Endothelial cell of umbilical vein (primary cell): ENCODE measurements at regions of chr13 and their contacts with region 1.

Region 1: DNA sequence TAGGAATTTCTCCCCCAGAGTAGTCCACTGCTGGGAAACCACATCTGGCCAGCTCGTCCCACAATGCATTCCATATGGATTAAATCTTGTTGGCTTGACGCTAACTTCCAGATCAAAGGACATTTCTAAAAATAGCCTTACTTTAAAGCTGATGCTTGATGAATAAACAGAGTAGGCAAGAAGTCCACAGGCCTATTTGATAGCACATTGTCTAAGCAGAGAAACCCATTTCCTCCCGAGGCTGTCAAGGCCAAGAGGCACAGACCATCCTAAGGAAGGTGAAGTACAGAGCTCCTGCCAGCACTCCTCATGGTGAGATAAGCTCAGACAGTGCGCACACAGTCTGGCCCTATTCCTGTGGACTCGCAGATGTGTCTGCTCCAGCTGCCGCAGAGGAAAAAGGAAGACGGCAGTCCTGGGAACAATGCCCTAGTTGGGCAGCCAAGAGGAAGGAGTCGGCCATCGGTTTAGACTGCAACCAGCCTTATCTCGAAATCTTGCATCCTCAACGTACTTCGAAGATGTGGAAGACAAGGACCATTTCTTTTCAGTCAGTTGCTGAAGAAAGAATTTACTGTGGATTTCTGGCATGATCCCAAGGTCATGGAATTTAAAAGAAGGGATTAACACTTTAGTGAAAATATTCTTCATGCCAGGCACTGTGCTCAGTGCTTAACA is 156.8 kb downstream of the RGCC start:
- DNase-seq: peak; percentile 98
- H3K4me3 ChIP-seq: no peak overlapping the region
- H3K27ac ChIP-seq: peak overlapping the region; percentile 93
- H3K4me1 ChIP-seq: peaks cover 39% of the 10 kb centered on the region
- H3K27me3 ChIP-seq: no peaks in the 10 kb centered on the region
- CTCF ChIP-seq: no peak
- POLR2A ChIP-seq: no peak

Region 2: GRCh38 chr13:41004875-41005693 is 609.0 kb before region 1 on chr13:
- CTCF ChIA-PET with region 1: no interaction called
- POLR2A ChIA-PET with region 1: no interaction called
- dilution Hi-C with region 1: no loop called
- intact Hi-C with region 1: no loop called
- DNase-seq: peak; percentile 34
- H3K4me3 ChIP-seq: peak overlapping the region in 1 of 3 experiments; percentile 2
- H3K27ac ChIP-seq: no peak overlapping the region
- H3K4me1 ChIP-seq: peaks cover 16% of the 10 kb centered on the region
- H3K27me3 ChIP-seq: no peaks in the 10 kb centered on the region
- CTCF ChIP-seq: no peak
- POLR2A ChIP-seq: no peak

Region 3: DNA sequence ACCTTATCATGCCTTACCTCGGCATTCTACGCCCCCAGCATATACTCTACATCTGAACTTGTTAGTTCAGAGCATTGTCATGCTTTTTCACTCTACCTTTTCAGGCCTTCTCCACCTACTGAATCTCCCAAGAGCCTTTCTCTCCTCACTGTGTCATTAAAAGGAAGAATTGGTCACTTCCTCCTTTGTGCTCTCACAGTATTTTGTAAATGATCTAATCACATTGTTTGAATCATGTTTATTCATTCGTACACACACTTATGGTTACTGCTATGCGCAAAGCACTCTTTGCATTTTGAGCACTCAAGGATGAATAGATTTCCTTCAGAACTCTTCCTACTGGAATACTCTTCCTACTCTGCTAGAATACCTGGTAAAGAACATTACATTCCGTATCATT is 579.2 kb before region 1 on chr13:
- CTCF ChIA-PET with region 1: no interaction called
- POLR2A ChIA-PET with region 1: no interaction called
- dilution Hi-C with region 1: no loop called
- intact Hi-C with region 1: no loop called
- DNase-seq: peak; percentile 70
- H3K4me3 ChIP-seq: no peak overlapping the region
- H3K27ac ChIP-seq: peak overlapping the region; percentile 65
- H3K4me1 ChIP-seq: peaks cover 22% of the 10 kb centered on the region
- H3K27me3 ChIP-seq: no peaks in the 10 kb centered on the region
- CTCF ChIP-seq: no peak
- POLR2A ChIP-seq: no peak

Region 4: GRCh38 chr13:41352935-41353840 is 260.9 kb before region 1 on chr13:
- CTCF ChIA-PET with region 1: no interaction called
- POLR2A ChIA-PET with region 1: no interaction called
- dilution Hi-C with region 1: no loop called
- intact Hi-C with region 1: loop called (anchors 2 kb)
- DNase-seq: peak; percentile 87
- H3K4me3 ChIP-seq: no peak overlapping the region
- H3K27ac ChIP-seq: peak overlapping the region; percentile 72
- H3K4me1 ChIP-seq: peaks cover 12% of the 10 kb centered on the region
- H3K27me3 ChIP-seq: no peaks in the 10 kb centered on the region
- CTCF ChIP-seq: peak; percentile 59 to 69
- POLR2A ChIP-seq: no peak

Region 5: GRCh38 chr13:41377446-41377845 is 236.7 kb before region 1 on chr13:
- CTCF ChIA-PET with region 1: no interaction called
- POLR2A ChIA-PET with region 1: no interaction called
- dilution Hi-C with region 1: no loop called
- intact Hi-C with region 1: no loop called
- DNase-seq: no peak
- H3K4me3 ChIP-seq: no peak overlapping the region
- H3K27ac ChIP-seq: no peak overlapping the region
- H3K4me1 ChIP-seq: no peaks in the 10 kb centered on the region
- H3K27me3 ChIP-seq: no peaks in the 10 kb centered on the region
- CTCF ChIP-seq: no peak
- POLR2A ChIP-seq: no peak

Region 6: DNA sequence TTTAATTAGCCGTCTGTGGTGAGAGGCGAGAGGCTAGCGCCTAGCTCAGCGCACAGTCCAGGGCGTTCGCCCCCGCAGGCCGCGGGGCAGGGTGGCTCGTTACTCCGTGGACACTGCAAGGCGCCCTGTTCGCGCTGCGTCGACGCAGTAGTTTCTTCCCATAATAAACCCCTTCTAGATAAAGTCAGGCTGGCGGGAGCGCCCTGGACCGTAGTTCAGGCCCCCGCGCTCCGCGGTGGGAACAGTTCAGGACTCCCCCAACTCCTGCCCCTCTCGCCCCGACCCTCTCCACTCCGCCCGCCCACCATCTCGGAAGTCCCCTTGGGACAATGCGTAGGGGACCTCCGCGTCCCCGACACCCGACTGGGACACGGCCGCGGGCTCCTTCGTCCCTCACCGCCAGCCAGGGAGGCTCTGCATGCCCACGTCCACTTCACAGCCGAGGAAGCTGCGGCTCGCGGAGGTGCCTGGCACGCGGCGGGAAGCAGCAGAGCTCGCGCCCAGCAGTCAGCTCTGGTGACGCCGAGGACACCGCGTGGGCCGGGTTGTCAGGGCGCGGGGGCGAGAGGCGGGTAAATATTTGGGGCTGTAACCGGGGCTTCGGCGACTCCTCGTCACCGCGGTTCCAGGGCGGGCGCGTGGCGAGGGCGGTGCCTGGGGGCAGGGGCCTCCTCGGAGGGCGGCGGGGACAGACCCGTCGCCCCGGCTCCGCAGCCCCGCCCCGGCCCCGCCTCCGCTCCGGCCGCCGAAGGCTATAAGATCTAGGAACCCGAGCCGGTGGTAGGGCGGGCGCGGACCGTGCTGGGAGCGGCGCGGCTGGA is 157.1 kb before region 1 on chr13 and contains the start of gene RGCC:
- CTCF ChIA-PET with region 1: interaction called, 6 read pairs
- POLR2A ChIA-PET with region 1: interaction called, 3 read pairs
- dilution Hi-C with region 1: no loop called
- intact Hi-C with region 1: loop called (anchors 1 kb)
- DNase-seq: peak; percentile 74
- H3K4me3 ChIP-seq: peak within 1 kb of the TSS; percentile 56 to 90 (median 66)
- H3K27ac ChIP-seq: peak within 1 kb of the TSS; percentile 49
- H3K4me1 ChIP-seq: peaks cover 19% of the 10 kb centered on the region
- H3K27me3 ChIP-seq: peaks cover 11 to 12% of the 10 kb centered on the region in 2 experiments
- CTCF ChIP-seq: no peak
- POLR2A ChIP-seq: peak; percentile 87
- total RNA-seq, gene RGCC: 138 and 148 TPM in 2 replicates

Region 7: DNA sequence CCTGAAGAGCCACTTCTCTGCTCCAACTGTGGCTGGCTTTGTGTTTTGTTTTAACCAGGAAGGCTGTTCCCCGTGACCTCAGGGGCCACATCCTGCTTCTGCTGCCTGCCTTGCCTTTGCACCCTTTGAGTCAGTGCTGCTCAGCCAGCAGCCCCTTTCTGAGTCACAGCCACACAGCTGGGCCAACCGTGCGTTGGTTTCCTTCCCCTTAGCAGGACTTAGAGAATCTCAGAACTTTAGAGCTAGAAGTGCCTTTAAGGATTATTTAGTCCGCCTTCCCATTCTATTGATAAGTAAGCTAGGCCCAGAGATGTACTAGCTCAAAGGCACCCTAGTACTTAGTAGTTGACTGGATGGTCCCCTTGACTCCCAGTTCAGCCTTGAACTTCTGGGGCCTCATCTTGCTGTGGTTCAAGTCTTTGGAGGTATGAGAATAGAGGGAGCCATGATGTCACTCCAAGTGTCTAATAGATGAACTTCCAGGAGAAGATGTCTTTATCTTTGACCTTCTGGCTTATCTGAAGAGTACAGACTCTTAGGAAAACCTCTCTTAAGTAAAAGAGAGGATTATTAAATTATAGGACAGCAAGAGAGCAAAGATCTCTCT is 148.8 kb before region 1 on chr13:
- CTCF ChIA-PET with region 1: interaction called, 5 read pairs
- POLR2A ChIA-PET with region 1: interaction called, 5 read pairs
- dilution Hi-C with region 1: no loop called
- intact Hi-C with region 1: loop called (anchors 1 kb)
- DNase-seq: peak; percentile 96
- H3K4me3 ChIP-seq: no peak overlapping the region
- H3K27ac ChIP-seq: peak overlapping the region; percentile 86
- H3K4me1 ChIP-seq: peaks cover 37% of the 10 kb centered on the region
- H3K27me3 ChIP-seq: no peaks in the 10 kb centered on the region
- CTCF ChIP-seq: no peak
- POLR2A ChIP-seq: peak; percentile 36

Region 8: DNA sequence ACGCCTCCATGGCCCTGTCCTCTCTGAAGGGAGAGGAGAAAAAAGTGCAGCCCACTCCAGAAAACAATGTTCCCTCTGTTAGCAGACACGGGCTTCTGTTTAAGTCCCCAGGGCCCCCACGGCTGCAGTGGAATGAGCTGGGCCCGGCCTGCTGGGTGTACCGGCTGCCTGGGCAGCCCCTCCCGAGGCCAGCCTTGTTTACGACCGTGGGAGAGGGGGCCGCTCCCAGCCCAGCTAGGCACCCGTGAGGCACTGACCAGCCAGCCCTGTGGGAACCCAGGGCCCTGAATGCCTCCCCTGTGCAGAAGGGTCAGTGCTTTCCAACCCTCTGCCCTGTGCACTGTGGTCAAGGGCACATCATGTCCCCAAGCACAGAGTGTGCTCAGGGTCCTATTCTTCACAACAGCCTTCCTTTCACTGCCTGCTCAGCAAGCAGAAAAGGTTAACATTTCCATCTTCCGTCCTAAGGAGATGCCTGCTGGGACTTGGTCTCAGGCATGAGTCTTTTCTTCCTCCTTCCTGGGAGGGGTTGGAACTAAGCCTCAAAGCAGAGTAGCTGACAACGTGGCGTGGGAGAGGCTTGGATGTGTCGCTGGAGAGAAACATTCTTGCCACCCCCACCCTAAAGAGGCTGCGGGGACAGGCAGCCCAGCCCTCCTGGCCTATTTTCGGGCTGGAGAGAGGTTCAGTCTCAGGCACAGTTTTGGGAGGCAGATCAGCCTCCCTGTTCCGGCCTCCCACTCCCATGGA is 66.7 kb before region 1 on chr13:
- CTCF ChIA-PET with region 1: no interaction called
- POLR2A ChIA-PET with region 1: no interaction called
- dilution Hi-C with region 1: no loop called
- intact Hi-C with region 1: no loop called
- DNase-seq: no peak
- H3K4me3 ChIP-seq: no peak overlapping the region
- H3K27ac ChIP-seq: no peak overlapping the region
- H3K4me1 ChIP-seq: no peaks in the 10 kb centered on the region
- H3K27me3 ChIP-seq: no peaks in the 10 kb centered on the region
- CTCF ChIP-seq: no peak
- POLR2A ChIP-seq: no peak

Region 9: GRCh38 chr13:41562083-41562482 is 52.0 kb before region 1 on chr13:
- CTCF ChIA-PET with region 1: no interaction called
- POLR2A ChIA-PET with region 1: interaction called, 4 read pairs
- dilution Hi-C with region 1: no loop called
- intact Hi-C with region 1: loop called (anchors 2 kb)
- DNase-seq: peak; percentile 49
- H3K4me3 ChIP-seq: no peak overlapping the region
- H3K27ac ChIP-seq: no peak overlapping the region
- H3K4me1 ChIP-seq: peaks cover 31% of the 10 kb centered on the region
- H3K27me3 ChIP-seq: no peaks in the 10 kb centered on the region
- CTCF ChIP-seq: no peak
- POLR2A ChIP-seq: no peak

Region 10: GRCh38 chr13:41596190-41596589 is 17.9 kb before region 1 on chr13:
- CTCF ChIA-PET with region 1: interaction called, 4 read pairs
- POLR2A ChIA-PET with region 1: no interaction called
- dilution Hi-C with region 1: no loop called
- intact Hi-C with region 1: loop called (anchors 2 kb)
- DNase-seq: peak; percentile 70
- H3K4me3 ChIP-seq: no peak overlapping the region
- H3K27ac ChIP-seq: peak overlapping the region; percentile 38
- H3K4me1 ChIP-seq: peaks cover 12% of the 10 kb centered on the region
- H3K27me3 ChIP-seq: no peaks in the 10 kb centered on the region
- CTCF ChIP-seq: peak in 1 of 2 donors; percentile 10
- POLR2A ChIP-seq: no peak

Region 11: GRCh38 chr13:41694545-41695301 is 80.6 kb after region 1 on chr13:
- CTCF ChIA-PET with region 1: no interaction called
- POLR2A ChIA-PET with region 1: no interaction called
- dilution Hi-C with region 1: no loop called
- intact Hi-C with region 1: loop called (anchors 1 kb)
- DNase-seq: peak; percentile 93
- H3K4me3 ChIP-seq: peak overlapping the region in 1 of 3 experiments; percentile 30
- H3K27ac ChIP-seq: peak overlapping the region; percentile 88
- H3K4me1 ChIP-seq: peaks cover 34% of the 10 kb centered on the region
- H3K27me3 ChIP-seq: no peaks in the 10 kb centered on the region
- CTCF ChIP-seq: no peak
- POLR2A ChIP-seq: no peak